GM12878 (cell line): ENCODE measurements at regions of chr1 and their contacts with region 1.

Region 1: DNA sequence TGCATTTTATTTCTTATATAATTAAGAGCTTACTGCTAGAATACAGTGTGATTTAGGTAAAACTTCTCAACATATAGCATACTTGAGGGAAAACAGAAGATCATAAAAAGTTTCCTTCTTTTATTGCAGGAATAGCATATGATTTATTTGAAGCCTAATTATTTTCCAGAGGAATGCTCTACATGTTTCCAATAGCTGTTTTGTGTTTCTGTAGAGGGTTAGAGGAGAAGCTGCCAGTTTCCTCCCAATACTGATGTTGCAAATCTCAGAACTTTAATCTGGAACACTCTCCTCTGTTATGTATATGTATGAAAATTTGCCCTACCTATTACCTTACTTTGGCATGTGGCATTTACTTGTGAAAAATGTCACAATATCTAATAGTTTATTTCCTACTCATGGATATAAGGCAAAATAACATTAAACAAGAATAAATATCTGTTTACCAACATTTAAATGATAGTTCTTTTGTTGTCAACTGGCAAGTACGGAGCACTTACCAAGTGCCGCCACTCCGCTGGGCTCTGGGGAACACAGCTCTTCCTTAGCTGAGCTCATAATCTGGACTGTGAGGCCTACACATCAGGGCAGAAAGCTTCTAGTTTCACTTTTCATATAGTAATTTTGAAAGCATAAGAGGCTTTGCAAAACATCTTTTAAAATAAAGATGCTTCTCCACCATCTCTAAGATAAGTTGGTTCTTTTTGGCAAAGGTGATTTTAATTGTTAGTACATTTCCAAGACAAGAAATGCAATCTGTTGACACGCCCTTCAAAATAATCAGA is 239.8 kb upstream of the C1orf105 start:
- DNase-seq: peak; percentile 69
- ATAC-seq: peak; percentile 88
- H3K4me3 ChIP-seq: peak overlapping the region; percentile 58
- H3K27ac ChIP-seq: peak overlapping the region; percentile 86
- H3K4me1 ChIP-seq: peaks cover 29% of the 10 kb centered on the region
- H3K27me3 ChIP-seq: no peaks in the 10 kb centered on the region
- CTCF ChIP-seq: no peak
- EP300 ChIP-seq: peak in 1 of 2 experiments; percentile 36; a peak in 1 of 4 replicates
- POLR2A ChIP-seq: 0 out of 2 replicates have a peak, but pooled peaks have one; percentile 22
- RAD21 ChIP-seq: peak; percentile 26; the same call in 1 of the 2 replicates

Region 2: DNA sequence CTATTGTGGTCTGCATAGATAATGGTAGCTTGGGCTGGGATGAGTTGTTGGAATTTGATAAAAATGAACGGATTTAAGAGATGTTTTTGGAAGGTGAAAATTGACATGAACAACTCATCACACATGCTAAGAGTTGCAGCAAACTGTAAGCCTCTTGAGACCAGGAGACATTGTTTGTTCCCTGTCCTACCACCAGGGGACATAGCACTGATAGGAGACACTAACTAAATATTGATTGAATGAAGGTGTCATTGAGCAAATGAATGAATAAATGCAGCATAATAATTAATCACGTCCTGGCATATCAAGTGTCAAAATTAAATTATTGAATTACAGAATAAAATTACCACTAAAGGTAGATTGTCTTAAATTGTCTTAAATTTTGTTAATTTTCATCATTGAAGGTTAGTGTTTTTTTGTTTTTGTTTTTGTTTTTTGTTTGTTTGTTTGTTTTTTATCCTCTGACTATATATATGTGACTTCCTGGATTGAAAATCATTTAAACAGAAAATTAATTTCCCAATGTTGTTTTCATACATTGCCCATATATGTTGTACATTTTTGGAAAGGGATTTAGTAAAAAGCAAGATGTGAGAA is 45.5 kb before region 1 on chr1:
- CTCF ChIA-PET with region 1: interaction called, 6 read pairs
- POLR2A ChIA-PET with region 1: no interaction called
- RAD21 ChIA-PET with region 1: interaction called, 7 read pairs
- SMC1A ChIA-PET with region 1: interaction called, 11 read pairs
- in situ Hi-C with region 1: no loop called
- intact Hi-C with region 1: loop called (anchors 2 kb)
- DNase-seq: no peak
- ATAC-seq: peak; percentile 62
- H3K4me3 ChIP-seq: no peak overlapping the region
- H3K27ac ChIP-seq: no peak overlapping the region
- H3K4me1 ChIP-seq: no peaks in the 10 kb centered on the region
- H3K27me3 ChIP-seq: no peaks in the 10 kb centered on the region
- CTCF ChIP-seq: peak; percentile 35 to 63 (median 56)
- EP300 ChIP-seq: no peak
- POLR2A ChIP-seq: no peak
- RAD21 ChIP-seq: peak; percentile 77

Region 3: GRCh38 chr1:172254521-172255222 is 74.0 kb after region 1 on chr1:
- CTCF ChIA-PET with region 1: interaction called, 4 read pairs
- POLR2A ChIA-PET with region 1: interaction called, 7 read pairs
- RAD21 ChIA-PET with region 1: interaction called, 4 read pairs
- SMC1A ChIA-PET with region 1: interaction called, 7 read pairs
- in situ Hi-C with region 1: no loop called
- intact Hi-C with region 1: loop called (anchors 5 kb)
- DNase-seq: no peak
- ATAC-seq: peak; percentile 51
- H3K4me3 ChIP-seq: no peak overlapping the region
- H3K27ac ChIP-seq: no peak overlapping the region
- H3K4me1 ChIP-seq: peaks cover 8% of the 10 kb centered on the region; the same call in 1 of the 2 replicates
- H3K27me3 ChIP-seq: no peaks in the 10 kb centered on the region
- CTCF ChIP-seq: no peak
- EP300 ChIP-seq: no peak
- POLR2A ChIP-seq: no peak
- RAD21 ChIP-seq: no peak

Region 4: DNA sequence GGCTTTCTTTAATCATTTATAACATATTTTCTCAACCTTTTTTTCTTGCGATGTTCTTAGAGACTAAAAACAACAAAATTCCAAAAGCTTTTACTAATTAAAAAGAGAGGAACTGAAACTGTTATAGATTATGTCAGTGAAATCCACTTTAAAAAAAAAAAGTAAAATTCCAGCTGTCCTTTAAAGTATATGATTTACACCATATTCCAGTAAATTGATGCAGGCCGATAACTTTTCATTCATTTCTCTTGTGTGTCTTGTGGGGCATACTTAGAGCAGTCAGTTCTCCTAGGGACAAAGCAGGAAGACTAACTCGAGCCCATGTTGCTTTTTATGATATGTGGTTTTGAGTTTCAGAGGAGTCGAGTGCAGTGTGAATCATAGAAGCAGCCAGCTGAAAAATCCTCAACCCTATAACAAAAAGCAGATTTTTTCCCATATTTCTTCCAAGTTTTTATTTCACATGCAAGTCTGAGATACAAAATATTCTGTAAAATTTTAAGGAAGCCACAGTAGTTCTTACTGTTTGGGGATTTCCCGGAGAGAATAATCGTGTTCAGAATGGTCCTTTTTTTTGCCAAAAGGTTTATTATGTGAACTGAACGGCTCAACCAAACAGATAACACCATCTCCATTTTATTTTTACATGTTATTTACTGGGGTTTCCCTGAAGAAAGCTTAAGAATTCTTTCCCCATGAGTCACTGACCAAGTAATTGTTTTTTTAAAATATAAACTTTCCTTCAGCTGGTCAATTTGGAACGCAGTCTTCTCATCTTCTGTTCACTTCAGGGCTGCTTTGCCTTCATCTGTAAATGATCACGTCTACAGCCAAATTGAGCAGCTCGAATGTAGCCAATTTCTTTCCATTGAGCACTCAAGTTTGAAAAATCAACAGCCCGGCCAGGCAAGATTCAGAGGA is 162.8 kb after region 1 on chr1:
- CTCF ChIA-PET with region 1: interaction called, 5 read pairs
- POLR2A ChIA-PET with region 1: interaction called, 6 read pairs
- RAD21 ChIA-PET with region 1: interaction called, 27 read pairs
- SMC1A ChIA-PET with region 1: interaction called, 130 read pairs
- in situ Hi-C with region 1: no loop called
- intact Hi-C with region 1: loop called (anchors 1 kb)
- DNase-seq: no peak
- ATAC-seq: peak; percentile 37
- H3K4me3 ChIP-seq: no peak overlapping the region
- H3K27ac ChIP-seq: peak overlapping the region; percentile 98
- H3K4me1 ChIP-seq: peaks cover 58% of the 10 kb centered on the region
- H3K27me3 ChIP-seq: no peaks in the 10 kb centered on the region
- CTCF ChIP-seq: no peak
- EP300 ChIP-seq: peak in 1 of 2 experiments; percentile 13; a peak in 1 of 4 replicates
- POLR2A ChIP-seq: no peak
- RAD21 ChIP-seq: no peak

Region 5: GRCh38 chr1:172380441-172381244 is 199.9 kb after region 1 on chr1:
- CTCF ChIA-PET with region 1: no interaction called
- POLR2A ChIA-PET with region 1: interaction called, 10 read pairs
- RAD21 ChIA-PET with region 1: interaction called, 13 read pairs
- SMC1A ChIA-PET with region 1: interaction called, 4 read pairs
- in situ Hi-C with region 1: no loop called
- intact Hi-C with region 1: no loop called
- DNase-seq: no peak
- ATAC-seq: peak; percentile 98
- H3K4me3 ChIP-seq: peak overlapping the region; percentile 4; the same call in 1 of the 2 replicates
- H3K27ac ChIP-seq: peak overlapping the region; percentile 93
- H3K4me1 ChIP-seq: peaks cover 20% of the 10 kb centered on the region
- H3K27me3 ChIP-seq: no peaks in the 10 kb centered on the region
- CTCF ChIP-seq: peak in 1 of 3 experiments; percentile 19; a peak in 1 of 6 replicates
- EP300 ChIP-seq: peak; percentile 16 to 83; a peak in 3 of 4 replicates
- POLR2A ChIP-seq: no peak
- RAD21 ChIP-seq: peak; percentile 27; the same call in 1 of the 2 replicates